Right ventricle myocardium superior (tissue), 1 donor: ENCODE measurements at regions of chr1 and their contacts with region 1.

Region 1: DNA sequence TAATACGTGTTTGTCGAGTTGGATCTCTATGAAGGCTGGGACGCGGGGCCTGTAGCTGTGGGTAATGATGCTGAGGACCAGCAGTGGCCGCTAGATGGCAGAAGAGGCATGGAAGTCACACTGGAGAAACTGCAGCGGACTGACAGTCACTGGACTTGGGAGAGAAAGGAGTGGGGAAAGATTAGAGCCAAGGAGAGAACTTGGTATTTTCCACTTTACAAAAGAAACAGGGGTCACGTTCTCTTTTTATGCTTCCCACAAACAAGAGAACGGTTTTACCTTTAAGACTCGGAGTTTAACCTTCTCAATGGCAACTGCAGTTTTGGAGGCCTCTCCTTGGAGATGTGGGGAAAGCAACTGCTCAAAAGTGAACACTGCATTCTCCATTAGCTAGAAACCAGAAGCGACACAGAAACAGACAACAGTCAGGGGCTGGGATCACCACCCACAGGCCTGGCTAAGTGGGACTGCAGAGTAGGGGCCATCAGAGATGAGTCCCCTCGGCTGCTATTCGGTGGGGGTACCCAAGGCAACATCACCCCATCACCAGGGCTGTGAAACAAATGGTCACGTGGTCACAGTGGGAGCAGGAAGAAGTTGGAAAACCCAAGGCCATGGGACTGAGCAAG is 51.1 kb upstream of the EDEM3 start:
- DNase-seq: peak; percentile 92
- ATAC-seq: peak; percentile 97

Region 2: GRCh38 chr1:184982002-184982954 is 176.5 kb after region 1 on chr1:
- intact Hi-C with region 1: loop called (anchors 1 kb)
- DNase-seq: peak; percentile 86
- ATAC-seq: peak; percentile 99